A673 (cell line): ENCODE measurements at regions of chr3 and their contacts with region 1.

Region 1: GRCh38 chr3:142279965-142280590 is 54.7 kb upstream of the GK5 start:
- DNase-seq: peak; percentile 85
- H3K4me3 ChIP-seq: no peak overlapping the region
- H3K27ac ChIP-seq: no peak overlapping the region
- H3K4me1 ChIP-seq: no peaks in the 10 kb centered on the region
- H3K27me3 ChIP-seq: no peaks in the 10 kb centered on the region
- CTCF ChIP-seq: peak; percentile 73

Region 2: DNA sequence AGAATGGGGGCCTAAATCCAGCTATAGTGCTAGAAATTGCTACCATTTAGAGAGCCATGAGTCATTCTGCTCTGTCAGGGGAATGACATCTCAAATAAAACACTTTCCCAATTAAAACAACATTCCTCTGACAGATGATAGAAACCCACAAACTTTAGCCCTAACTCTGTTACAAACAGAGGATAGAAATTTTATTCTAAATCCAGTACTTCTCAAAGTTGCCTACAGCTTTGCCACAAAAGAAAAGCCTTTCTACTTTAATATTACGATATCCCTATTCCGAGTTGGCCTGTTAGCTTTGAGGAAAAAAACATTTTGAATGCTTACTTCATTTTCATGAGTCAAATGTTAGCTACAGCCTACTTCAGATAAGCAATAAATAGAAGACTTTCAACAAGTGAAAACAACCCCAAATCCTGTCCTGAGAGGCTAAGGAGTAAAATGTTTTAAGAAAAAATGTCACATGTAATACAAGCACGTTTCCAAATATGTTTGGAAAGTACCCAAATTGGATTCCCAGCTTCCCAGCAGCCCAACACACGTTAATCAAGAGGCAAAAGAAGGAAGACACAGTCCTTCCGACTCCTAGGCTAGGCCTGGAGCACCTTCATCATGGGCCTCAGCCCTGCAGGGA is 320.0 kb before region 1 on chr3:
- CTCF ChIA-PET with region 1: no interaction called
- POLR2A ChIA-PET with region 1: no interaction called
- intact Hi-C with region 1: loop called (anchors 2 kb)
- DNase-seq: peak; percentile 50
- H3K4me3 ChIP-seq: no peak overlapping the region
- H3K27ac ChIP-seq: peak overlapping the region; percentile 24
- H3K4me1 ChIP-seq: no peaks in the 10 kb centered on the region
- H3K27me3 ChIP-seq: no peaks in the 10 kb centered on the region
- CTCF ChIP-seq: no peak

Region 3: DNA sequence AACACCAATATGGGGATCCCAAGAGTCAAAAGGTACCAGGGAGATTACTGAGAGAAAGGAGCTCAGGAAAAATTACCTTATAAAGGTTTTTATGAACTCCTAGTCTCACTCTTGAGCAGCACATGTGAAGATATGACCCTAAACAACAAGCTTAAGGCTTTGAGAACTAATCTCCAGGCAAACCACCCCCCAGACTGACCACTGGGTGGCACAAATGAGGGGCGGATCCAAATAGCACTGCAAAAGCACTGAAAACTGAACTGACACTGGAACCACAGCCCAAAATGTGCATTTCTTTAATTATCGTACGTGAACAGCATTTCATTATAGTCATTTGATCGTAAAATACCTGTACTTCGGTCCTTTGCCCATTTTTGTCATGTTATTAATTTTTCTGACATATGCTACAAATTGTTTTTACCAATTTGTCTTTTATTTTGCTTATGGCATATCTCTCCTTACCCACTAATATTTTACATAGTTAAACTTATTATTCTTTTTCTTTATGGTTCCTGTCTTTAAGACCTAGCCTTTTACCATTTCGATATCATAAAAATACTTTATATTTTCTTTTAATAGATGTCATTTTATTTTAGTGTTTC is 99.2 kb before region 1 on chr3:
- CTCF ChIA-PET with region 1: interaction called, 10 read pairs
- POLR2A ChIA-PET with region 1: no interaction called
- intact Hi-C with region 1: loop called (anchors 2 kb)
- DNase-seq: peak; percentile 64
- H3K4me3 ChIP-seq: no peak overlapping the region
- H3K27ac ChIP-seq: no peak overlapping the region
- H3K4me1 ChIP-seq: no peaks in the 10 kb centered on the region
- H3K27me3 ChIP-seq: no peaks in the 10 kb centered on the region
- CTCF ChIP-seq: peak; percentile 66